Activated CD4-positive, alpha-beta T cell treated with anti-CD3 and anti-CD28 coated beads for 36 hours (primary cell): ENCODE measurements at regions of chr16 and their contacts with region 1.

Region 1: DNA sequence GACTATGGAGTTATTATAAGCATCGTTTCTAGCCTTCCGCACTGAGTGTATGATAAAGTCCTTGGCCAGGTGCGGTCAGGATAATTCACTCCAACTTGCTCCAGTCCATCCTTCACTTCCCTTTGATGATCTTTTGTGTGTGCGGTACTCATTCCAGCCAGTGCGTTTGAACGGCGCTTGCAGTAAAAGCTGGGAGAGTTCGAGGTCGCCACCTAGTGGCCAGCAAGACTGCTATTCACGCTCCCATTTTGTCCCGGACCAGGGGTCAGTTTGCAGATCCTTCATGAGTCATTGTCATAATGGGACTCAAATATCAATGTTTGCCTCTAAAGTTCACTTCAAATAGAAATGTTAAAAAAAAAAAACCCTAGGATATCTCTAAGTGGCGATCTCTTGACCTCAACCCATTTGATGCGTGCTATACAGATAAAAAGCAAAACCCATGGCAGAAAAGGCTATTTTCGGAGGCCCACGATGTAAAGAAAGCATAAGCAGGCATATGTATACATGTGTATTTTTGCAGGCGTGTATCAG is 417.1 kb downstream of the TMEM114 start:
- DNase-seq: peak; percentile 72
- ATAC-seq: no peak
- H3K4me3 Mint-ChIP-seq: no peak overlapping the region
- H3K27ac Mint-ChIP-seq: no peak overlapping the region
- H3K4me1 Mint-ChIP-seq: no peaks in the 10 kb centered on the region
- H3K27me3 Mint-ChIP-seq: no peaks in the 10 kb centered on the region

Region 2: GRCh38 chr16:6684076-6684673 is 1489.0 kb before region 1 on chr16:
- CTCF ChIA-PET with region 1: no interaction called
- POLR2A ChIA-PET with region 1: no interaction called
- intact Hi-C with region 1: loop called in 1 of 2 experiments (anchors 2 kb)
- DNase-seq: peak; percentile 41
- ATAC-seq: no peak
- H3K4me3 Mint-ChIP-seq: no peak overlapping the region
- H3K27ac Mint-ChIP-seq: no peak overlapping the region
- H3K4me1 Mint-ChIP-seq: no peaks in the 10 kb centered on the region
- H3K27me3 Mint-ChIP-seq: no peaks in the 10 kb centered on the region

Region 3: DNA sequence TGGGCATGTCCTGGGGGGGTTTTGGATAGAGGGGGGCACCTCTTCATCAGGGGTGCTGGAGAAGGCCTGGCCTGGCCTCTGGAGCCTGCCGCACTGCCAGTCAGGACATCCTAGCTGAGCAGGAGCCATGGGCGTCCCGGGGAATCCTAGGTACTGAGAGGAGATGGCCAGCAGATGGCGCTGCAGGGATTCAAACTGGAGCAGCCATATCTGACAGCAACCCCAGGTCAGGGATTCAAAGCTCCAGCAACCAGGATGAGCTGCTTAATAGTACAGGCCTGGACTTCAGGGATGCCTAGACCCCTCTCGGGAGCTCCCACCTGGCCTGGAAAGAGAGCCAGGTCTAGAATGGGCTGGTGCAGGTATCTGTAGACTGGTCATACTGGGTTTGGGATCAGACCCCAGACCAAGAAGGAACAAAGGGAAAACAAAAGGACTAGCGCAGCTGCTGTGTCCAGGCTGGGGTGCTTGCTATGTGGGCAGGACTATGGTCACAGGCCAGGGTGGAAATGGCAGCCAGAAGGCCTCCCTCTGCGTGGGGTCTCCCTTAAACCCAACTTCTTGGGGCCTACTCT is 1147.5 kb before region 1 on chr16:
- CTCF ChIA-PET with region 1: no interaction called
- POLR2A ChIA-PET with region 1: no interaction called
- intact Hi-C with region 1: loop called in 1 of 2 experiments (anchors 5 kb)
- DNase-seq: peak; percentile 69
- ATAC-seq: no peak
- H3K4me3 Mint-ChIP-seq: no peak overlapping the region
- H3K27ac Mint-ChIP-seq: no peak overlapping the region
- H3K4me1 Mint-ChIP-seq: no peaks in the 10 kb centered on the region
- H3K27me3 Mint-ChIP-seq: no peaks in the 10 kb centered on the region

Region 4: GRCh38 chr16:7513429-7513828 is 659.7 kb before region 1 on chr16:
- CTCF ChIA-PET with region 1: no interaction called
- POLR2A ChIA-PET with region 1: no interaction called
- intact Hi-C with region 1: loop called in 1 of 2 experiments (anchors 1 kb)
- DNase-seq: peak; percentile 38
- ATAC-seq: no peak
- H3K4me3 Mint-ChIP-seq: no peak overlapping the region
- H3K27ac Mint-ChIP-seq: no peak overlapping the region
- H3K4me1 Mint-ChIP-seq: no peaks in the 10 kb centered on the region
- H3K27me3 Mint-ChIP-seq: no peaks in the 10 kb centered on the region